ENCODE measurements at regions of chr15 and their contacts with region 1.

Region 1: DNA sequence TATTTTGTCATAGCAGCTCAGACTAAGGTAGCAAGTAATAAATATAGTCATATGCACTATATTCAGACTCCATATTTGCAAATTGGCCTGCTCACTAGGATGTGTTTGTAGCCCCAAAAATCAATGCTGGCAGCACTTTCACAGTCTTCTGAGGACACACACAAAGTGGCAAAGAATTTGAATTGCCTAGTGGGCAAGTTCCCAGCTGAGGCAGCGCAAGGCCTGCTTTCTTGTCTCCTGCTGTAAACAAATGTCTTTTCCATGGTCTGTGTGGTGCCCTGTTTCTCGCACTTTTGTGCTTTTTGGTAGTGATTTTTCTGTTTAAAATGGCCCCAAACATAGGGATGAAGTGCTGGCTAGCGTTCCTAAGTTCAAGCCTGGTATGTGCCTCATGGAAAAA is 416.0 kb downstream of the OCA2 start:
- DNase-seq: no peak
- ATAC-seq: no peak
- H3K4me3 ChIP-seq: no peak overlapping the region
- H3K27ac ChIP-seq: no peak overlapping the region
- H3K4me1 ChIP-seq: no peaks in the 10 kb centered on the region
- H3K27me3 ChIP-seq: no peaks in the 10 kb centered on the region

Region 2: DNA sequence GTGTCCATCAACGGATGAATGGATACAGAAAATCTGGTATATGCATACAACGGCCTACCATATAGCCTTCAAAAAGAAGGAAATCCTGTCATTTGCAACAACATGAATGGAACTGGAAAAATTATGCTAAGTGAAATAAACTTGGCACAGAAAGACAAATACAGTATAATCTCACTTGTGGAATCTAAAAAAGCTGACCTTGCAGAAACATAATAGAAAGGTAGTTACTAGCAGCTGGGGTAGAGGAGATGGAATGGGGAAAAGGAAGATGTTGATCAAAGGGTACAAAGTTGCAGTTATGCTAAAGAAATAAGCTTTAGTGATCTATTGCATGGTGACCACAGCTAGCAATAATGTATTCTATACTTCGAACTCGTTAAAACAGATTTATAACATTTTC is 28.1 kb before region 1 on chr15:
- intact Hi-C with region 1: loop called in 1 of 2 experiments (anchors 2 kb)
- DNase-seq: no peak
- ATAC-seq: no peak
- H3K4me3 ChIP-seq: no peak overlapping the region
- H3K27ac ChIP-seq: no peak overlapping the region
- H3K4me1 ChIP-seq: no peaks in the 10 kb centered on the region
- H3K27me3 ChIP-seq: no peaks in the 10 kb centered on the region